ENCODE measurements at regions of chr16 and their contacts with region 1.

Region 1: DNA sequence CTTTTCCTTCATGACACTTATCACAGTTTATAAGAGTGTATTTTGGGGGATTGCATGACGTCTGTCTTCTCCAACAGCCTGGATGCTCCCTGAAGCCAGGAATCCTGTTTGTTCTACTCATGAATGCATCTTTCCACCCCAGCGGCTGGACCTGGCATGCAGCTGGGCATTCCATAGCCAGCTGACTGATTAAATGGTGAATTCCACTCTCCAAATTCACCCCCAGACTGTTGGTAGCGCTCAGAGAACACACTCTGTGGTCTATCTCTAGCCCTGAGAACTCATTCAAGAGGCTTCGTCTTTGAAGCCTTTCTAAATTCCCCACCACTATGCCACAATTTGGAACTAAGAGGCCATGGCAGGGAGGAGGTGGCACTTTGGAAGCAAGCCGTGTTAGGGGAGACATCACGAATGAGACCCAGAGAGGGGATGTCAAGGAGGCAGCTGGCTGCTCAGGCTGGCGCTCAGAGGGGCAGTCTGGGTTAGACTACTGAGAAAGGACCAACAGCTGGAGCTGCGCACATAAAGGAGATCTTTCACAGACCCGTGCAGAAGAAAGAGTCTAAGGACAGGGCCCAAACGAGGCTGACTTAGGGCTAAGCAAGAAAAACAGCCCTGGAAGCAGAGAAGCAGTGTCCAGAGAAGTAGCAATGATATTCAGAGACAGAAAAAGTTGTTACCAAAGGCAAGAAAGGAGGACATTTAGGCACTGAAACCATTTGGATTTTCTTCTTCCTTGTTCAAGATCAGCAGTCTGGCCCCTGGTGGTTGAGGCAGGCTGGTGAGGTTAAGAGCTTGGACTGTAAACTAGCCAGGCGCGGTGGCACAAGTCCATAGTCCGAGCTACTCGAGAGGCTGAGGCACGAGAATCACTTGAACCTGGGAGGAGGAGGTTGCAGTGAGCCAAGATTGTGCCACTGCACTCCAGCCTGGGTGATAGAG is 42.4 kb upstream of the ZNF629 start:
- DNase-seq: no peak
- ATAC-seq: no peak
- H3K4me3 ChIP-seq: no peak overlapping the region
- H3K27ac ChIP-seq: no peak overlapping the region
- H3K4me1 ChIP-seq: no peaks in the 10 kb centered on the region
- H3K27me3 ChIP-seq: no peaks in the 10 kb centered on the region
- CTCF ChIP-seq: no peak

Region 2: DNA sequence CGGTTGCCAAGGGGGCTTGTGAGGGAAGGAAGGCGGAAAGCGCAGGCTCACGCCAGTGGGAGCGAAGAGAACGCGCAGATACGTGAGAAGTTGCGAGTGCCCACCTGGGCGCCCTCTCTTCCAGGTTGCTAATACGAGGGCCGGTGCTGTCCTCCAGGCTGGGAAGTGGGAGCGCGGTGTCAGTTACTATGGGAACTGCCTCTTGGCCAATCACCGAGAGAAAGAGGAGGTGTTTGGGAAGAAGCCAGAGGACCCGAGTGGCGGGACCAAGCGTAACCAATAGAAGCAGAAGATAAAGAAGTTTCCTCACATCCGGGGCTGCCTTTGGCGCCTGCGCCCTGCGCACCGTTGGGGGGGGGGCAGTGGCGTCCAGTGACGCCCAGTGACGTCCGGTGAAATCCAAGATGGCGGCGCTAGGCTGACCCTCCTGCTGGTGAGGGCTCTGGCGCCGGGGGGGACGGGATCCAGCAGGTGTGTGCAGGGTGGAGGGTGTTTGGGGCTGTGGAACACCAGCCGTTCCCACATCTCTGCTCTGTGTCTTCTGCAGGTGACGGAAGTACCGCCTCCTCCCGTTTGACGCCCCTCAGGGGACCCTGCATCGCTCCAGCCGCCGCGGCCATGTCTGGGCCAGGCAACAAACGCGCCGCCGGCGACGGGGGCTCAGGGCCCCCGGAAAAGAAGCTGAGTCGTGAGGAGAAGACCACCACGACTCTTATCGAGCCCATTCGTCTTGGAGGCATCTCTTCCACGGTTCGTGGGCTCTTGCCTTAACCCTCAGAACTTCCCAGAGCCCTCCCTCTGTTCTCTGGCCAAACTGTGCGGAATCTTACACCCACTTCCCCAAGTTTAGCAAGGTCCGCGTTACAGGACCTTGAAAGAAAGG is 67.2 kb before region 1 on chr16 and contains the starts of genes CFAP119 and RNF40:
- CTCF ChIA-PET with region 1: no interaction called
- POLR2A ChIA-PET with region 1: no interaction called
- intact Hi-C with region 1: no loop called
- DNase-seq: peak; percentile 96
- ATAC-seq: peak; percentile 90
- H3K4me3 ChIP-seq: peak within 1 kb of the TSS; percentile 82
- H3K27ac ChIP-seq: peak within 1 kb of the TSS; percentile 27
- H3K4me1 ChIP-seq: peaks cover 20% of the 10 kb centered on the region
- H3K27me3 ChIP-seq: no peaks in the 10 kb centered on the region
- CTCF ChIP-seq: no peak
- total RNA-seq, gene CFAP119: 8.6 and 9.6 TPM in 2 replicates
- total RNA-seq, gene RNF40: 64.1 and 80.2 TPM in 2 replicates

Region 3: GRCh38 chr16:30797670-30798309 is 31.6 kb before region 1 on chr16:
- CTCF ChIA-PET with region 1: interaction called, 3 read pairs
- POLR2A ChIA-PET with region 1: interaction called, 11 read pairs
- intact Hi-C with region 1: no loop called
- DNase-seq: no peak
- ATAC-seq: peak; percentile 58; the same call in 1 of the 2 replicates
- H3K4me3 ChIP-seq: no peak overlapping the region
- H3K27ac ChIP-seq: no peak overlapping the region
- H3K4me1 ChIP-seq: no peaks in the 10 kb centered on the region
- H3K27me3 ChIP-seq: no peaks in the 10 kb centered on the region
- CTCF ChIP-seq: 0 out of 2 replicates have a peak, but pooled peaks have one; percentile 21

Measured in PC-3 (cell line).